AG04449 (cell line): ENCODE measurements at regions of chr14 and their contacts with region 1.

Region 1: DNA sequence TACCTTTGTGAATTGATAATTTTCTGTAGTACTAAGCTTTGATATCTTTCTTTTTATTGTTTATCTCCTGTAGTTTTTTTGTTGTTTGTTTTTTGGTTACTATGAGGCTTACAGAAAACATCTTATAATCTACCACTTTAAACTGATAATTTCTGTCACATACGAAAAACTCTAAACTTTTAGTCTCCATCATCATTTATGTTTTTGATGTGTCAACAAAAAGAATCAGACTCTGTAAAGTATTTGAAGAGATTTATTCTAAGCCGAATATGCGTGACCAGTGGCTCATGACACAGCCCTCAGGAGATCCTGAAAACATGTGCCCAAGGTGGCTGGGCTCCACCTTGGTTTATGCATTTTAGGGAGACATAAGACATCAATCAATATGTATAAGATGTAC is 167.1 kb upstream of the ARHGAP5 start:
- DNase-seq: no peak
- H3K4me3 ChIP-seq: no peak overlapping the region
- CTCF ChIP-seq: no peak

Region 2: GRCh38 chr14:31926123-31926522 is 16.1 kb after region 1 on chr14:
- CTCF ChIA-PET with region 1: interaction called, 17 read pairs
- POLR2A ChIA-PET with region 1: no interaction called
- DNase-seq: no peak
- H3K4me3 ChIP-seq: no peak overlapping the region
- CTCF ChIP-seq: peak; percentile 32